GM12878 (cell line): ENCODE measurements at regions of chr19 and their contacts with region 1.

Region 1: DNA sequence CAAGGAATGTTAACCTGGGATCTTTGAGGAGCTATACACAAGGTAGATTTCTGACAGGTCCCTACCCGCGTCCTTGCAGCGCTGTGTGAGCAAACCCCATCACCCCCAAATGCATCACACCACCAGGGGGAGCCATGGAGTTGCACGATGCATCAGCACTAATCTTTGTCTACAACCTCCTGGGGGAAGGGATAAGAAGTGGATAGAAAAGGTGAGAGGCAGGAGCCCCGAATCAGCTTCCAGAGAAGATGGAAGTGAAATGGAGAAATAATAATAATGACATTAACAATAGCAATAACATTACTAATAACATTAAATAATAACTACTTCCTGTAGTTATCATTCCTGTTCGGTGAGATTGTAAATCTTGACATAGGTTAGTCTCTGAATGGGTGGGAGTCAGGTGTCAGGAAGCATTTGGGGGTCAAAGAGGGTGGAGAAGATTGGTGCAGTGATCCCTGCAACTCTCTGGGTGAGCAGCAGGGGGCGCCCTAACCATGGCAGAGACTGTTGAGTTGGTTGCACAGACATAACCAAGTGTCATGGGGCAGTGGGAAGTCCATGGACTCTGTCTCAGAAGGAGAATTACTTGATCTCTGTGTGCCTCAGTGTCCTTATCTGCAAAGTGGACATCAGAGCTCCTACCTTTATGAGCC is 16.5 kb downstream of the SIGLEC7 start:
- DNase-seq: no peak
- ATAC-seq: peak; percentile 84
- H3K4me3 ChIP-seq: no peak overlapping the region
- H3K27ac ChIP-seq: no peak overlapping the region
- H3K4me1 ChIP-seq: peaks cover 9% of the 10 kb centered on the region
- H3K27me3 ChIP-seq: peaks cover 2 to 3% of the 10 kb centered on the region in 2 experiments; a peak in 3 of 4 replicates
- CTCF ChIP-seq: peak; percentile 64 to 92 (median 77)
- EP300 ChIP-seq: no peak
- POLR2A ChIP-seq: no peak
- RAD21 ChIP-seq: peak; percentile 74

Region 2: GRCh38 chr19:51094696-51095279 is 63.8 kb before region 1 on chr19:
- CTCF ChIA-PET with region 1: no interaction called
- POLR2A ChIA-PET with region 1: no interaction called
- RAD21 ChIA-PET with region 1: no interaction called
- SMC1A ChIA-PET with region 1: no interaction called
- in situ Hi-C with region 1: no loop called
- intact Hi-C with region 1: no loop called
- DNase-seq: no peak
- ATAC-seq: no peak
- H3K4me3 ChIP-seq: no peak overlapping the region
- H3K27ac ChIP-seq: no peak overlapping the region
- H3K4me1 ChIP-seq: no peaks in the 10 kb centered on the region
- H3K27me3 ChIP-seq: no peaks in the 10 kb centered on the region
- CTCF ChIP-seq: peak; percentile 57 to 74 (median 62)
- EP300 ChIP-seq: no peak
- POLR2A ChIP-seq: no peak
- RAD21 ChIP-seq: peak; percentile 55; the same call in 1 of the 2 replicates

Region 3: DNA sequence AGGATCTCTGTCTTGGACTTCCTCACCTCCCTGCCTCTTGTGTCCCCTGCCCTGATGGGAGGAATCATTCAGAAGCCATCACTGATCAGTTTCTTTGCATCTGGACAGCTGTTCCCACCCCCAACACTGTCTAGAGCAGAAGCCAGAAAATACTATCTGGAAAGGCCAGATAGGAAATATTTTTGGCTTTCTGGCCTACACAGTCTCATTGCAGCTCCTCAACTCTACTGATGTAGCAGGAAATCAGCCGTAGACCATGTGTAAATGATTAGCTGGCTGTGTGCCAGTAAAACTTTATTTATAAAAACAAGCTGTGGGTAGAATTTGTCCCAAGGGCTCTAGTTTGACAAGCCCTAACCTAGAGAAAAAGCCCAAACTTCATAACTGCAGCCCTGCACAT is 10.9 kb before region 1 on chr19:
- CTCF ChIA-PET with region 1: interaction called, 21 read pairs
- POLR2A ChIA-PET with region 1: no interaction called
- RAD21 ChIA-PET with region 1: no interaction called
- SMC1A ChIA-PET with region 1: no interaction called
- in situ Hi-C with region 1: no loop called
- intact Hi-C with region 1: no loop called
- DNase-seq: no peak
- ATAC-seq: no peak
- H3K4me3 ChIP-seq: no peak overlapping the region
- H3K27ac ChIP-seq: no peak overlapping the region
- H3K4me1 ChIP-seq: no peaks in the 10 kb centered on the region
- H3K27me3 ChIP-seq: peaks cover 0 to 3% of the 10 kb centered on the region in 2 experiments; a peak in 3 of 4 replicates
- CTCF ChIP-seq: no peak
- EP300 ChIP-seq: no peak
- POLR2A ChIP-seq: no peak
- RAD21 ChIP-seq: no peak

Region 4: DNA sequence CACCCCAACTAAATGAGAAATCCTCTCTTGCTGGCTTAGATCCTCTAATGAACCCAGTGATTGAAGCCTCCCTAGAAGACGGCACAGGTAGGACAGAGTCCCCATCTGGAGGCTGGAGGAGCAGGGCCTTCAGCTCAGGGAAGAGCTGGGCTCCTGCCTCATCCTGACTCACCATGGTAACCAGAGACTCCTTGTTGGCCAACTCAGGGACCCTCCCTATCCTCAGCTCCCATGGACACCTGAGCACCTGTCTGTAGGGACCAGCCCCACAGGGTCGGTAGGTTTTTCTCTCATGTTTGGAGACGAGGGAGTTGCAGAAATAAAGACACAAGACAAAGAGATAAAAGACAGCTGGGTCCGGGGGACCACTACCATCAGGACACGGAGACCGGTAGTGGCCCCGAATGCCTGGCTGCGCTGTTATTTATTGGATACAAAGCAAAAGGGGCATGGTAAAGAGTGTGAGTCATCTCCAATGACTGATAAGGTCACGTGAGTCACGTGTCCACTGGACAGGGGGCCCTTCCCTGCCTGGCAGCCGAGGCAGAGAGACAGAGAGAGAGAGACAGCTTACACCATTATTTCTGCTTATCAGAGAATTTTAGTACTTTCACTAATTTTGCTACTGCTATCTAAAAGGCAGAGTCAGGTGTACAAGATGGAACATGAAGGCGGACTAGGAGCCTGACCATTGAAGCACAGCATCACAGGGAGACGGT is 10.1 kb after region 1 on chr19:
- CTCF ChIA-PET with region 1: interaction called, 15 read pairs
- POLR2A ChIA-PET with region 1: no interaction called
- RAD21 ChIA-PET with region 1: interaction called, 3 read pairs
- SMC1A ChIA-PET with region 1: no interaction called
- in situ Hi-C with region 1: no loop called
- intact Hi-C with region 1: no loop called
- DNase-seq: no peak
- ATAC-seq: no peak
- H3K4me3 ChIP-seq: no peak overlapping the region
- H3K27ac ChIP-seq: no peak overlapping the region
- H3K4me1 ChIP-seq: peaks cover 7% of the 10 kb centered on the region
- H3K27me3 ChIP-seq: peaks cover 0 to 2% of the 10 kb centered on the region in 2 experiments; a peak in 1 of 4 replicates
- CTCF ChIP-seq: no peak
- EP300 ChIP-seq: no peak
- POLR2A ChIP-seq: no peak
- RAD21 ChIP-seq: no peak